Endothelial cell of umbilical vein (primary cell): ENCODE measurements at regions of chr18 and their contacts with region 1.

Region 1: GRCh38 chr18:58493516-58494253 is 135.2 kb downstream of the ALPK2 start:
- DNase-seq: peak; percentile 61
- H3K4me3 ChIP-seq: no peak overlapping the region
- H3K27ac ChIP-seq: no peak overlapping the region
- H3K4me1 ChIP-seq: peaks cover 3% of the 10 kb centered on the region
- H3K27me3 ChIP-seq: peaks cover 14 to 20% of the 10 kb centered on the region in 2 experiments
- CTCF ChIP-seq: peak; percentile 84
- POLR2A ChIP-seq: no peak

Region 2: DNA sequence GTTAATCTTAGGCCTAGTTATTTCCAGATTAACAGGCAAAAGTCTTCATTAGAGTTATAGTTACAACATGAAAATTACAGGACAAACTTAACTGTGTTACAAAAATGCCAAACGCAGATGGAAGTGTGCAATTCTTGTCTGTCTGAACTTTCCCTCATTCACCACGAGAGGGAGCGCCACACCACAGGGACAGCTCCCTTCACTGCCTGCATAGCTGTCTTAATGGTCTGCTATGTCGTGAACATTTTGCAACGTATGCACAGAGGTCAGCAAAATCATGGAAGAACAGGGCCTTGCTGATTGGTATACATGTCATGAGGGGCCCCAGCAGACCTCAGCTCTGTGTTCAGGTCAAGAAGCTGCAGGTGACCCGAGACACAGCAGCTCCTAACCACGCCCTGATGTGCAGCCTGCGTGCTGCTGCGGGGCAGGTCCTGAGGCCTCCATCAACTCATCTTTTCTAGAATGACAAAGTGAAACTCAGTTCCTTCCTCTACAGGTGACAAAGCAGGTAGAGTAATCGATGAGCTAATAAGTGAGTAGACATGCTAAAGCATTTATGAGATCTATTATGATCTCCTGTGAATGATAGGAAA is 611.8 kb before region 1 on chr18:
- CTCF ChIA-PET with region 1: interaction called, 7 read pairs
- POLR2A ChIA-PET with region 1: no interaction called
- dilution Hi-C with region 1: no loop called
- intact Hi-C with region 1: loop called (anchors 1 kb)
- DNase-seq: peak; percentile 83
- H3K4me3 ChIP-seq: no peak overlapping the region
- H3K27ac ChIP-seq: no peak overlapping the region
- H3K4me1 ChIP-seq: no peaks in the 10 kb centered on the region
- H3K27me3 ChIP-seq: no peaks in the 10 kb centered on the region
- CTCF ChIP-seq: peak; percentile 85 to 91
- POLR2A ChIP-seq: no peak

Region 3: DNA sequence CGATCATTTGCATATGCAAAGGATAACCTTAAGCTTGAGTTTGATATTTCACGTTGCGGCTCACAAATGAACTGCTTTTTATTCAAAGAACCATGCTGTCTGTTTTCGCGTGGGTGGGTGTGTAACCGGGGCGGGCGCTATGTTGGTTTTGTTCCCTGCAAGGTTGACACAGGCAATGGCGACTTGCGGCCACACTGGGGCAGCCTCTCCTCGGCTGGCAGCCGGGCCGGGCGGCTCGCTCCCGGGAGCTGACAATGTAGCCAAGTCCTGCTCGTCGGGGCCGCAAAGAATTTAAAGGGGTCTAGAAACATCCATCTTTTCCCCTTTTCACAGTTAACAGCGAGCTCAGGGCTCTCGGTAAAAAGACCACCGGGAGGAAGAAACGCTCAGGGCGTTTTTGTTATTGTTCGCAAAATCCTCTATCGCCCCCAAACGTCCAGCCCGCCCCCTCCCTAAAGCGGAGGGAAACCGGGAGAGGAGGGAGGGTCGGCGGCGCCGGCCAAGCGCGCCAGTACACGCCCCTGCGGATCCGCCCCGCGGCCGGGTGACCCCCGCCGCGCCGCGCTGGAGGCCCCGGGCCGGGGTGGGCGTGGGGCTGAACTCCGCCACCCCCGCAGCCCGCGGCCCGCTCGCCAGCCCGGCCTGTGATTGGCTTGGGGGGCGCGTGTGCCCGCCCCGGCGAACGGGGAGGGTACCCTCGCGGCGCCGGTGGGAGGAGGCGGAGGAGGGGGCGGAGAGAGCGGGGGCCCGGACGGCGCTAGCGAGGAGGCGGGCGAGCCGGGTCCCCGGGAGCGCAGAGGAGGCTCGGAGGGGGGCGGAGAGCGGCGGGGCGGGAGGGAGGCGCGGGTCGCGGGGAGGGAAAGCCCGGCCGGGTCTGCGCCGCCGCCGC is 449.9 kb before region 1 on chr18 and contains the start of gene NEDD4L:
- CTCF ChIA-PET with region 1: interaction called, 23 read pairs
- POLR2A ChIA-PET with region 1: no interaction called
- dilution Hi-C with region 1: no loop called
- intact Hi-C with region 1: loop called (anchors 1 kb)
- DNase-seq: peak; percentile 87
- H3K4me3 ChIP-seq: peak within 1 kb of the TSS; percentile 75 to 93 (median 77)
- H3K27ac ChIP-seq: peak within 1 kb of the TSS; percentile 72
- H3K4me1 ChIP-seq: peaks cover 16% of the 10 kb centered on the region
- H3K27me3 ChIP-seq: no peaks in the 10 kb centered on the region
- CTCF ChIP-seq: peak; percentile 79 to 91
- POLR2A ChIP-seq: no peak
- total RNA-seq, gene NEDD4L: 78.9 and 95.9 TPM in 2 replicates

Region 4: GRCh38 chr18:58195278-58195765 is 298.4 kb before region 1 on chr18:
- CTCF ChIA-PET with region 1: interaction called, 3 read pairs
- POLR2A ChIA-PET with region 1: no interaction called
- dilution Hi-C with region 1: no loop called
- intact Hi-C with region 1: loop called (anchors 1 kb)
- DNase-seq: no peak
- H3K4me3 ChIP-seq: peak overlapping the region in 2 of 3 experiments; percentile 5 to 52
- H3K27ac ChIP-seq: peak overlapping the region; percentile 24
- H3K4me1 ChIP-seq: peaks cover 31% of the 10 kb centered on the region
- H3K27me3 ChIP-seq: no peaks in the 10 kb centered on the region
- CTCF ChIP-seq: no peak
- POLR2A ChIP-seq: no peak

Region 5: DNA sequence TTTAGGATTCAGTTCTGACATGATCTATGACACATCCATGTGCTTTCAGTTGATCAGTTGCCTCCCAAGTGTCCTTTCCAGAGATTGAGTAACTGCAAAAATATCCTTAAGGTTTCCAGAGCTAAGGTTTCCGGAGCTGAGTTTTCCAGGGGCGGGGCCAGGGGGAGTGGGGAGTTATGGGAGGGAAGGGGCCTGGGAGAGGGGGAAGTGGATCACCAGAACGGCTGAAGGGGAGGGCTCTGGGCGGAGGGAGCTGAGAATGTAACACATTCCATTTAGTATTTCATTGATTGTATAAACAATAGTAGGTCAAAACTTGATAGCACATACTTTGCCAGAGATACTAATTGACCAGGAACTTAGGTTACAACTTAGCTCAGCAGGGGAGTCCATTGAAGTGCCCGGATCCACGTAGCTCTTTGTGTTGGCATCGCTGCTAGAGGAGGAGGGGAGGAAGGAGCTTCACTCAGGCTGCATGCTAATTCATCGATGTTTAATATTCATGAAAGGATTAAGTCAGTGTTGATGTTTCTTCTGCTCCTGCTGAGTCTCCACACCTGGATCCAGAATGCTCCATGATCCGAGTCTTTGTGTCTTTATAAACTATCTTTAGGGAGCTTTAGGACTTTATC is 154.6 kb before region 1 on chr18:
- CTCF ChIA-PET with region 1: interaction called, 11 read pairs
- POLR2A ChIA-PET with region 1: no interaction called
- dilution Hi-C with region 1: no loop called
- intact Hi-C with region 1: loop called (anchors 5 kb)
- DNase-seq: peak; percentile 73
- H3K4me3 ChIP-seq: peak overlapping the region in 1 of 3 experiments; percentile 15
- H3K27ac ChIP-seq: peak overlapping the region; percentile 25
- H3K4me1 ChIP-seq: peaks cover 15% of the 10 kb centered on the region
- H3K27me3 ChIP-seq: no peaks in the 10 kb centered on the region
- CTCF ChIP-seq: no peak
- POLR2A ChIP-seq: no peak

Region 6: GRCh38 chr18:58761241-58761969 is 267.7 kb after region 1 on chr18:
- CTCF ChIA-PET with region 1: interaction called, 77 read pairs
- POLR2A ChIA-PET with region 1: no interaction called
- dilution Hi-C with region 1: no loop called
- intact Hi-C with region 1: loop called (anchors 1 kb)
- DNase-seq: no peak
- H3K4me3 ChIP-seq: no peak overlapping the region
- H3K27ac ChIP-seq: no peak overlapping the region
- H3K4me1 ChIP-seq: no peaks in the 10 kb centered on the region
- H3K27me3 ChIP-seq: peaks cover 2 to 8% of the 10 kb centered on the region in 2 experiments
- CTCF ChIP-seq: no peak
- POLR2A ChIP-seq: no peak